SK-N-SH (cell line): ENCODE measurements at regions of chr6 and their contacts with region 1.

Region 1: DNA sequence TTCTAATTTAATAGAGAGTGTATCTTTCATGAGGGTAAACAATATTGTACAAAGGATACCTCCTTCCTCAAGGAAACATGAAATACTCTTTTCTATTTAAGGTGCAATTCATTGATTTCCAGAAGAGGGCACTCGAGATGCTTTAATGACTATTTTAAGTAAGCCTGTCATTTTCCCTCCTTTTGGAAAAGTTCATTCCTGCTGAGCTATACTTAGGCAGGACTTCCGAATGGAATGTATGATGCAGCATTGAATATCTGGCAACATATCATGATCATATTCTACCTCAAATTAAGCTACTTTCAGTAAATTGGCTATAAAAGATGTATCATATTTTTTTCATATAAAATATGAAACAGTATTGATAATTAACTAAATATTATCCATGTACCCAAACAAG is 5.0 kb downstream of the DST start:
- DNase-seq: peak; percentile 43
- H3K4me3 ChIP-seq: no peak overlapping the region
- H3K27ac ChIP-seq: 0 out of 4 replicates have a peak overlapping the region, but pooled peaks of 1 of the 2 experiments have one; percentile 23
- H3K4me1 ChIP-seq: peaks cover 0 to 6% of the 10 kb centered on the region in 2 experiments; a peak in 2 of 4 replicates
- H3K27me3 ChIP-seq: no peaks in the 10 kb centered on the region
- CTCF ChIP-seq: peak; percentile 76
- EP300 ChIP-seq: no peak
- RAD21 ChIP-seq: peak; percentile 86

Region 2: GRCh38 chr6:56624046-56624727 is 13.5 kb before region 1 on chr6:
- CTCF ChIA-PET with region 1: interaction called, 26 read pairs
- POLR2A ChIA-PET with region 1: no interaction called
- DNase-seq: no peak
- H3K4me3 ChIP-seq: no peak overlapping the region
- H3K27ac ChIP-seq: no peak overlapping the region
- H3K4me1 ChIP-seq: no peaks in the 10 kb centered on the region
- H3K27me3 ChIP-seq: no peaks in the 10 kb centered on the region
- CTCF ChIP-seq: no peak
- EP300 ChIP-seq: no peak
- RAD21 ChIP-seq: no peak

Region 3: GRCh38 chr6:56693246-56693607 is 55.6 kb after region 1 on chr6:
- CTCF ChIA-PET with region 1: interaction called, 85 read pairs
- POLR2A ChIA-PET with region 1: no interaction called
- DNase-seq: no peak
- H3K4me3 ChIP-seq: no peak overlapping the region
- H3K27ac ChIP-seq: peak overlapping the region; percentile 46 to 64; a peak in 3 of 4 replicates
- H3K4me1 ChIP-seq: peaks cover 0 to 55% of the 10 kb centered on the region in 2 experiments
- H3K27me3 ChIP-seq: no peaks in the 10 kb centered on the region
- CTCF ChIP-seq: no peak
- EP300 ChIP-seq: no peak
- RAD21 ChIP-seq: no peak

Region 4: DNA sequence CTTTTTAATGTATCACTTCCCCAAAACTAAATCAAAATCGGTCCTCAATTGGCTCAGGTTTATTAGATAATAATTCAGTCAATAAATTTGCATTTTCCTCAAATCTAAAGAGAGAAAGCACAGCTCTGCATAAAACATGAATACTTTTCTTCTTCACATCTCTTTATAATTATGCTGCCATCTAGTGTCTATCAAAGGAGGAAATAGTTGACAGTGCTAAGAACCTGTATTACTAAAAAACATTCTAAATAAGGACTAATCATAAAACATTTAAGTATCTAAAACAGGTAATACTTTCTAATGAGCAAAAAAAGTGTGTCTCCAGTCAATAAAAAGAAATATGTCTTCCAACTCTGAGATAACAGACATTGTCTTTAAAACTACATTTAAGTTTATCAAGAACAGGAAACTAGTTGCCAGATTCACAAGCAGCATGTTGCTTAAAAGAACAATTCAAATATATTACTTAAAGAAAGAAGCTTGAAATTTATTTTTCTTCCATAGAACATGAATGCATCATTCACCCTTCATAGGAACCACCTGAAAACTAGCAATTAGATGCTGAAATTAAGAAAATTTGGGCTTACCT is 61.5 kb after region 1 on chr6:
- CTCF ChIA-PET with region 1: interaction called, 85 read pairs
- POLR2A ChIA-PET with region 1: no interaction called
- DNase-seq: no peak
- H3K4me3 ChIP-seq: no peak overlapping the region
- H3K27ac ChIP-seq: peak overlapping the region in 1 of 2 experiments; percentile 21; a peak in 1 of 4 replicates
- H3K4me1 ChIP-seq: peaks cover 0 to 19% of the 10 kb centered on the region in 2 experiments; a peak in 3 of 4 replicates
- H3K27me3 ChIP-seq: no peaks in the 10 kb centered on the region
- CTCF ChIP-seq: peak; percentile 68
- EP300 ChIP-seq: no peak
- RAD21 ChIP-seq: peak; percentile 71

Region 5: DNA sequence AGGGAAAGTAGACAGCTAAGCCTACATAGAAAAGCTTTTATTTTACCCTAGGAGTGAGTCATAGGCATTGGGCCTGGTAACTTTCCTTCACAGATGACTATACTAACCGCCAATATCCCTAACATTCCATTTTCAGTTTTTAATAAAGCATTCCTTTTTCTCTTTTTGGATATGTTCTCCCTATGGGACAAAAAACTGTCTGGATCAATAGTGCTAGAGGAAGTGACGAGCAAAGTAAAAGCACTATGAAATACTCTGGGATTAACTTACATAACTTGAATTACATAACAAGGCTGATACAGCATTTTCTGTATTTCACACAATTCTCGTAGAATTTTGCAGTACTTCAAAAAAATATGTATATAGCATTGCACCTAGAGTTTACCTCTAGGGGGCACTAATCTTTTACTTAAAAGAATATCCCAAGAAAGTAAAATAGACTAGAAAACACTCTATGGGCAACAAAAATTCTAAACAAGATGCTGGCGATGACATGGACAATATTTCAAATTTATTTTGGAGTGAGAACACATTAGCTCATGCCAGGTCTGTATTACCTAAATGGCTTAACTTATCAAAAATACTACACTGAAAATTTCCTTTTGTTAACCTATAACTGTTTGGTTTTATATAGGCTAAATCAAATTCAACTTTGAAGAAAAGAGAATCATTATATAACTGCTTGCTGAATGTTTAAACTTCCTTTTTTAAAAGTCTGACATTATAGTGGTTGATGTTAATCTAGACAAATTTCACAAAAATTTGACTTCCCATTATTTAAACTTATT is 71.4 kb after region 1 on chr6:
- CTCF ChIA-PET with region 1: interaction called, 23 read pairs
- POLR2A ChIA-PET with region 1: no interaction called
- DNase-seq: peak; percentile 39
- H3K4me3 ChIP-seq: peak overlapping the region; percentile 12 to 50; a peak in 3 of 4 replicates
- H3K27ac ChIP-seq: peak overlapping the region; percentile 64 to 93
- H3K4me1 ChIP-seq: peaks cover 2 to 33% of the 10 kb centered on the region in 2 experiments
- H3K27me3 ChIP-seq: no peaks in the 10 kb centered on the region
- CTCF ChIP-seq: peak; percentile 80
- EP300 ChIP-seq: peak in 1 of 2 experiments; percentile 76; a peak in 2 of 4 replicates
- RAD21 ChIP-seq: peak; percentile 71